ENCODE measurements at regions of chr5 and their contacts with region 1.

Region 1: GRCh38 chr5:68392617-68393016 is 177.1 kb downstream of the PIK3R1 start:
- DNase-seq: no peak
- ATAC-seq: peak; percentile 29
- H3K4me3 ChIP-seq: no peak overlapping the region
- H3K4me3 Mint-ChIP-seq: no peak overlapping the region
- H3K27ac ChIP-seq: no peak overlapping the region
- H3K27ac Mint-ChIP-seq: no peak overlapping the region
- H3K4me1 ChIP-seq: peaks cover 0 to 8% of the 10 kb centered on the region in 2 donors
- H3K4me1 Mint-ChIP-seq: peaks cover 0 to 28% (median 0%) of the 10 kb centered on the region in 7 donors
- H3K27me3 ChIP-seq: no peaks in the 10 kb centered on the region
- H3K27me3 Mint-ChIP-seq: peaks cover 0 to 20% (median 0%) of the 10 kb centered on the region in 5 donors

Region 2: DNA sequence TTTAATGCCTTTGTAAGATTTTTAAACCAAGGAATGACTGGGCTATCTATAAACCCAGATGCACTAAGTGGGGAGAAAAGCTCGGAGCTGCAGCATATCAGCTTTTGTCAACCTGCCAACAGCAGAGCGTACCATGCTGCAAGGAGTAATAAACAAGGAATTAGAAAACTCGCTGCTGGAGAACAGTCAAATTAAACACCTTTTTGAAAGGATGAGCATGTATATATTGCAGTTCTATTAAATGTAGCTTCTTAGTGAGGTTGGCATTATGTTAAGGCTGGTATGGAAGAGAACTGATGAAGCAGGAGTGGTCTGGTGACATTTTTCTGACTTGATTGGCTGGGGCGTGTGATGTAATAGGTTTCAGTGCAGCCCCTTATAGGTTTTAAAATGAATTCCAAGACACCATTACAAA is 102.3 kb before region 1 on chr5:
- CTCF ChIA-PET with region 1: no interaction called
- POLR2A ChIA-PET with region 1: no interaction called
- intact Hi-C with region 1: no loop called
- DNase-seq: no peak
- ATAC-seq: no peak
- H3K4me3 ChIP-seq: no peak overlapping the region
- H3K4me3 Mint-ChIP-seq: peak overlapping the region in 5 of 10 donors; percentile 36 to 87 (median 81)
- H3K27ac ChIP-seq: no peak overlapping the region
- H3K27ac Mint-ChIP-seq: peak overlapping the region in 8 of 9 donors; percentile 13 to 97 (median 68)
- H3K4me1 ChIP-seq: peaks cover 43 to 58% of the 10 kb centered on the region in 2 donors
- H3K4me1 Mint-ChIP-seq: peaks cover 39 to 82% (median 73%) of the 10 kb centered on the region in 7 donors
- H3K27me3 ChIP-seq: no peaks in the 10 kb centered on the region
- H3K27me3 Mint-ChIP-seq: no peaks in the 10 kb centered on the region

Region 3: DNA sequence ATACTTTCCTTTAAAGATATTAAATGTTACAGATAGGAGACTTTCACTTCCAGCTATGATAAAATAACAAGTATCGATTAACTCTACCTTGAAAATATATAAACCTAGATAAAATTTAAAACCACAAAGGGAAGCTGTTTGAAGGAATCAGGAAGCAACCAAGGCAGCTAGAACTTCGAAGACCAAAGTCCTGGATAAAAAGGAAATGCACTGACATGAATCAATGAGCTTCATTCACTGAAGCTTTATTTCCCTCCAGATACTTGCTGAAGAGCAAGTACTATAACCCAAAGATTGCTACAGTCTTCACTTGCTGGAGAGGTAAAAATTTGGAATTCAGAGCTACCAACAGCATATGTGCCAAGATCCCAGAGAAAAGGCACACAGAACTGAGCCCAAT is 32.9 kb before region 1 on chr5:
- CTCF ChIA-PET with region 1: no interaction called
- POLR2A ChIA-PET with region 1: no interaction called
- intact Hi-C with region 1: loop called in 1 of 2 experiments (anchors 5 kb)
- DNase-seq: no peak
- ATAC-seq: no peak
- H3K4me3 ChIP-seq: no peak overlapping the region
- H3K4me3 Mint-ChIP-seq: no peak overlapping the region
- H3K27ac ChIP-seq: no peak overlapping the region
- H3K27ac Mint-ChIP-seq: no peak overlapping the region
- H3K4me1 ChIP-seq: no peaks in the 10 kb centered on the region
- H3K4me1 Mint-ChIP-seq: peaks cover 0 to 13% (median 2%) of the 10 kb centered on the region in 7 donors
- H3K27me3 ChIP-seq: no peaks in the 10 kb centered on the region
- H3K27me3 Mint-ChIP-seq: peaks cover 0 to 21% (median 0%) of the 10 kb centered on the region in 5 donors

Measured in naive thymus-derived CD4-positive, alpha-beta T cell (primary cell).